ENCODE measurements at regions of chr16 and their contacts with region 1.

Region 1: DNA sequence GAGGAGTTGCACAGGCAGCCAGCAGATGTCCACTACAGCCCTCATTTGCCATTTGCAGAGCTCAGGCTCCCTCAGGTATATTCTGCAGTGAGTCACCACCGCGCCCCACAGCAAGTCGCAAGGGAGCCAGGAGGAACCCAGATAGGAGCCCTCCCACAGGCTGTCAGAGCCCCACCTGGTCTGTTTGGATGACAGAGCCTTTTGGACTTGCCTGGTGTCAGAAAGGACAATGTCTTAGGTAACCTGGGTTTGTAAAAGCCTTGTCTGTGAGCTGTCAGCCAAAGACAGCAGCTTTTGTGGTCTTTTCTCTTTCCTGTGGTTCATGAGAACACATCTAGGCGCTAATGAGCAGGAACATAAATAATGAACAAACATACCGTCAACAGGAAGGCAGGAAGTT is 70.9 kb downstream of the GNAO1 start:
- DNase-seq: peak; percentile 18 to 93 (median 56)
- ATAC-seq: peak; percentile 96
- H3K4me3 ChIP-seq: peak overlapping the region; percentile 4
- H3K4me3 Mint-ChIP-seq: peak overlapping the region; percentile 23
- H3K27ac ChIP-seq: peak overlapping the region in 1 of 2 donors; percentile 51
- H3K27ac Mint-ChIP-seq: peak overlapping the region; percentile 75
- H3K4me1 ChIP-seq: peaks cover 49% of the 10 kb centered on the region
- H3K4me1 Mint-ChIP-seq: peaks cover 46% of the 10 kb centered on the region
- H3K27me3 ChIP-seq: no peaks in the 10 kb centered on the region
- H3K27me3 Mint-ChIP-seq: no peaks in the 10 kb centered on the region
- CTCF ChIP-seq: no peak

Region 2: GRCh38 chr16:56191156-56191815 is 70.9 kb before region 1 on chr16 and contains the start of gene GNAO1:
- CTCF ChIA-PET with region 1: interaction called, 3 read pairs
- POLR2A ChIA-PET with region 1: interaction called, 6 read pairs
- intact Hi-C with region 1: loop called in 1 of 2 experiments (anchors 1 kb)
- DNase-seq: peak; percentile 33 to 90 (median 54)
- ATAC-seq: peak; percentile 69
- H3K4me3 ChIP-seq: peak within 1 kb of the TSS; percentile 66
- H3K4me3 Mint-ChIP-seq: peak within 1 kb of the TSS; percentile 89
- H3K27ac ChIP-seq: no peak within 1 kb of the TSS
- H3K27ac Mint-ChIP-seq: peak within 1 kb of the TSS; percentile 47
- H3K4me1 ChIP-seq: peaks cover 39% of the 10 kb centered on the region
- H3K4me1 Mint-ChIP-seq: peaks cover 25% of the 10 kb centered on the region
- H3K27me3 ChIP-seq: peaks cover 34 to 54% of the 10 kb centered on the region in 2 experiments
- H3K27me3 Mint-ChIP-seq: peaks cover 63% of the 10 kb centered on the region
- CTCF ChIP-seq: no peak
- total RNA-seq, gene GNAO1: 7.3 to 7.9 TPM

Region 3: GRCh38 chr16:56300891-56301850 is 39.0 kb after region 1 on chr16:
- CTCF ChIA-PET with region 1: no interaction called
- POLR2A ChIA-PET with region 1: no interaction called
- intact Hi-C with region 1: no loop called
- DNase-seq: no peak
- ATAC-seq: no peak
- H3K4me3 ChIP-seq: no peak overlapping the region
- H3K4me3 Mint-ChIP-seq: no peak overlapping the region
- H3K27ac ChIP-seq: no peak overlapping the region
- H3K27ac Mint-ChIP-seq: no peak overlapping the region
- H3K4me1 ChIP-seq: peaks cover 5% of the 10 kb centered on the region
- H3K4me1 Mint-ChIP-seq: no peaks in the 10 kb centered on the region
- H3K27me3 ChIP-seq: no peaks in the 10 kb centered on the region
- H3K27me3 Mint-ChIP-seq: no peaks in the 10 kb centered on the region
- CTCF ChIP-seq: no peak

Measured in CD4-positive, alpha-beta T cell (primary cell).